ENCODE measurements at regions of chr3 and their contacts with region 1.

Region 1: DNA sequence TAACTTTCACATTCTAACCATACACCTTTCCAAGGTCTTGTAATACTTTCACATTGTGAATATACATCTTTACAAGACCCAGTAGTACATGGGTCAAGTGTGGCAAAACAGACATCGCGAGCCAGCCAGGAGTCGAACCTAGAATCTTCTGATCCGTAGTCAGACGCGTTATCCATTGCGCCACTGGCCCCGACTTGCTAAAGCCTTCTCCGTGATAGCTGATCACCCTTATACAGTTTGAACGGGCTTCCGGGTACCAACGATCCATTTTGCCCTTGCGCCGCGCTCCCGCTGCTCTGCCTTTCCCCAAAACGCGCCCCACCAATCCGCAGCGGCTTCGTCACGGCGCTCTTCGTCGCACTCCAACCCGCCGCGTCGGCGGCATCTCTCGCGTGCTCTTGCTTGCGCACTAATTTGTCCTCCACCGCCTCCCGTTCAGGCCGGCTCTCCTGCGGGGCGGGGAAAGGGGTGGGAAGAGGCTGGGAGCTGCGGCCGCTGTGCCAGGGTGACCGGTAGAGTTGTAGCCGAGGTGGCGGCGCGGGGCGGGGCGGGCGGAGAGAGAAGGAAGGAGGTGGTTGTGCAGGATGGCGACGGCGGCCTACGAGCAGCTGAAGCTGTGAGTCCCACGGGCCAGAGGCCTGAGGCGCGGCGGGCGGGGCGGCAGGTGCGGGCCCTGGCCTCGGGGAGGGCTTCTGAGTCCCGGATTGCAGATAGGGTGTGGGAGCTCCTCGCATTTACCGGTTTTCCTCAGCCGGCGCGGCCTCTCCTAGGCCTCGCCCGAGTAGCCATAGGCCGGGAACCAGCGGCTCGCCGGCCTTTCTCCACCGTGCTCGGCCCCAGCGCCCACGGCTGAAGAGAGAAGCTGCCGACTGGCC is at the start of gene SACM1L:
- DNase-seq: peak; percentile 98
- H3K4me3 Mint-ChIP-seq: peak within 1 kb of the TSS; percentile 83
- H3K27ac Mint-ChIP-seq: peak within 1 kb of the TSS; percentile 90
- H3K4me1 Mint-ChIP-seq: peaks cover 44% of the 10 kb centered on the region
- H3K27me3 Mint-ChIP-seq: peaks cover 3% of the 10 kb centered on the region
- total RNA-seq, gene SACM1L: 44.9 to 51.0 TPM

Region 2: GRCh38 chr3:45145681-45146614 is 543.2 kb before region 1 on chr3 and contains the start of gene CDCP1:
- CTCF ChIA-PET with region 1: no interaction called
- intact Hi-C with region 1: no loop called
- DNase-seq: peak; percentile 14
- H3K4me3 Mint-ChIP-seq: peak within 1 kb of the TSS; percentile 79
- H3K27ac Mint-ChIP-seq: no peak within 1 kb of the TSS
- H3K4me1 Mint-ChIP-seq: peaks cover 12% of the 10 kb centered on the region
- H3K27me3 Mint-ChIP-seq: peaks cover 35% of the 10 kb centered on the region
- total RNA-seq, gene CDCP1: 0.41 to 0.59 TPM

Region 3: GRCh38 chr3:45677033-45677433 is 12.1 kb before region 1 on chr3:
- CTCF ChIA-PET with region 1: interaction called, 4 read pairs
- intact Hi-C with region 1: loop called (anchors 1 kb)
- DNase-seq: peak; percentile 78
- H3K4me3 Mint-ChIP-seq: peak overlapping the region; percentile 63
- H3K27ac Mint-ChIP-seq: peak overlapping the region; percentile 89
- H3K4me1 Mint-ChIP-seq: peaks cover 28% of the 10 kb centered on the region
- H3K27me3 Mint-ChIP-seq: no peaks in the 10 kb centered on the region

Region 4: GRCh38 chr3:45715945-45716344 is 26.8 kb after region 1 on chr3:
- CTCF ChIA-PET with region 1: no interaction called
- intact Hi-C with region 1: loop called (anchors 2 kb)
- DNase-seq: no peak
- H3K4me3 Mint-ChIP-seq: no peak overlapping the region
- H3K27ac Mint-ChIP-seq: no peak overlapping the region
- H3K4me1 Mint-ChIP-seq: peaks cover 21% of the 10 kb centered on the region
- H3K27me3 Mint-ChIP-seq: no peaks in the 10 kb centered on the region

Region 5: DNA sequence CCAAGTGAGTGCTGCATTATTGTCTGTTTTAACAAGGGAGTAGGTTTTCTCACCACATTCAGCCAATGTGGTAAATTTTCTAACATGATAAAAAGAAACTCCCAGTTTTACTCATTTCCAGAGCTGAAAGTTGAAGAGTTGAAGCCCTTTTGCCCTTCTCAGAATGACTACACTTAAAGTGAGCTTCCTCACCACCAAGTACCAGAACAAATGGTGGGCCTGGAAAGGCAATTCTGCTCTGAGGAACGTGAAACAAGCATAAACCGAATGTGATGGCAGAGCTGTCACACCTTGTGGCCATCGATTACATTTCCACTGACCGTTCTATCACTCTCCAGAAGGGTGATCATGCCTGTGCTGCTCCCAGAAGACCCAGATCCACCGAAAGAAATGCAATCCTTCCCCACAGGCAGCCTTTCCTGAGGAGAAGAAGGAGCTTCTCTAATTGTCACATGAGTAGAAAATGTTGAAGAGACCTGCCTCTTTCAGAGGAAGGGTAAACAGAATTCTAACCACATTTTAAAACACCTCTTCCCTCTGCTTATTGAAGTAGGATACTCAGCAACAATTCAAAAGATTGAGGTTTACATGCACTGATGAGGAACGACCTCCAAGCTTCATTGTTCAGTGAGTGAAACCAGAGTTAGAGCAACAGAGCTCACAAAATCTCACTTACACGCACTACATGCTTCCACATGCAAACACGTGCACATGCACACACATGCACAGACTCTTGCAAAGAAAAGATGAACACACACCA is 175.8 kb after region 1 on chr3:
- CTCF ChIA-PET with region 1: no interaction called
- intact Hi-C with region 1: loop called (anchors 5 kb)
- DNase-seq: peak; percentile 48
- H3K4me3 Mint-ChIP-seq: no peak overlapping the region
- H3K27ac Mint-ChIP-seq: no peak overlapping the region
- H3K4me1 Mint-ChIP-seq: peaks cover 44% of the 10 kb centered on the region
- H3K27me3 Mint-ChIP-seq: peaks cover 53% of the 10 kb centered on the region

Region 6: GRCh38 chr3:45995236-45996192 is 306.4 kb after region 1 on chr3 and contains the start of gene FYCO1:
- CTCF ChIA-PET with region 1: no interaction called
- intact Hi-C with region 1: loop called (anchors 5 kb)
- DNase-seq: peak; percentile 94
- H3K4me3 Mint-ChIP-seq: peak within 1 kb of the TSS; percentile 82
- H3K27ac Mint-ChIP-seq: peak within 1 kb of the TSS; percentile 81
- H3K4me1 Mint-ChIP-seq: peaks cover 31% of the 10 kb centered on the region
- H3K27me3 Mint-ChIP-seq: peaks cover 3% of the 10 kb centered on the region
- total RNA-seq, gene FYCO1: 10.2 to 10.5 TPM